Panc1 (cell line): ENCODE measurements at regions of chr13 and their contacts with region 1.

Region 1: GRCh38 chr13:27321468-27322431 is 51.1 kb downstream of the RASL11A start:
- DNase-seq: no peak
- ATAC-seq: no peak
- H3K4me3 ChIP-seq: no peak overlapping the region
- H3K27ac ChIP-seq: no peak overlapping the region
- H3K4me1 ChIP-seq: no peaks in the 10 kb centered on the region
- H3K27me3 ChIP-seq: no peaks in the 10 kb centered on the region
- CTCF ChIP-seq: no peak

Region 2: GRCh38 chr13:27283906-27284493 is 37.8 kb before region 1 on chr13:
- CTCF ChIA-PET with region 1: interaction called, 11 read pairs
- POLR2A ChIA-PET with region 1: no interaction called
- in situ Hi-C with region 1: no loop called
- intact Hi-C with region 1: no loop called
- DNase-seq: no peak
- ATAC-seq: peak; percentile 87
- H3K4me3 ChIP-seq: no peak overlapping the region
- H3K27ac ChIP-seq: peak overlapping the region; percentile 40; the same call in 1 of the 2 replicates
- H3K4me1 ChIP-seq: peaks cover 12% of the 10 kb centered on the region
- H3K27me3 ChIP-seq: no peaks in the 10 kb centered on the region
- CTCF ChIP-seq: peak; percentile 74

Region 3: DNA sequence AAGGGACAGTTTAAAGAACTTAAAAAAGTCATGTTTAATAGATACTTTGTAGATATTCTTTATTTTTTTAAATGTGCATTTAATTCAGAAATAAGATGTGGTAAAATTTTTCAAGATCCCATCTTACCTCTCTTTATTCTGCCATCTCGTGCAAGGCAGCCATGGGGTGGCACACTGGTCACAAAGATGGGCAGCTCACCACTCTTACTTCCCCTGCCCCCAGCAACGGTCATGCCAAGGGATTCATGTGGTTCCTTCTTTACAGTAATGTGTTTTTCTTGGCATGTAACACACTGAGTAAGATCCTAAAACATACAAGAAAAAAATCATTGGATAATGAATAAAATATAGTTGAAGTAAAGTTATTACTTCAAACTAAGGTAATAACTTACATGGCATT is 234.4 kb after region 1 on chr13:
- CTCF ChIA-PET with region 1: no interaction called
- POLR2A ChIA-PET with region 1: no interaction called
- in situ Hi-C with region 1: no loop called
- intact Hi-C with region 1: no loop called
- DNase-seq: no peak
- ATAC-seq: no peak
- H3K4me3 ChIP-seq: no peak overlapping the region
- H3K27ac ChIP-seq: no peak overlapping the region
- H3K4me1 ChIP-seq: no peaks in the 10 kb centered on the region
- H3K27me3 ChIP-seq: no peaks in the 10 kb centered on the region
- CTCF ChIP-seq: peak; percentile 18; the same call in 1 of the 2 replicates